Activated CD4-positive, alpha-beta T cell treated with anti-CD3 and anti-CD28 coated beads for 36 hours (primary cell): ENCODE measurements at regions of chr14 and their contacts with region 1.

Region 1: GRCh38 chr14:99946652-99947489 is 118.4 kb upstream of the EVL start:
- DNase-seq: peak; percentile 73
- ATAC-seq: peak; percentile 79
- H3K4me3 Mint-ChIP-seq: peak overlapping the region; percentile 4
- H3K27ac Mint-ChIP-seq: no peak overlapping the region
- H3K4me1 Mint-ChIP-seq: peaks cover 13% of the 10 kb centered on the region
- H3K27me3 Mint-ChIP-seq: peaks cover 15% of the 10 kb centered on the region

Region 2: GRCh38 chr14:99930420-99931274 is 16.2 kb before region 1 on chr14:
- CTCF ChIA-PET with region 1: interaction called, 8 read pairs
- POLR2A ChIA-PET with region 1: no interaction called
- intact Hi-C with region 1: loop called in 1 of 2 experiments (anchors 2 kb)
- DNase-seq: peak; percentile 78
- ATAC-seq: peak; percentile 97
- H3K4me3 Mint-ChIP-seq: no peak overlapping the region
- H3K27ac Mint-ChIP-seq: no peak overlapping the region
- H3K4me1 Mint-ChIP-seq: peaks cover 3% of the 10 kb centered on the region
- H3K27me3 Mint-ChIP-seq: no peaks in the 10 kb centered on the region